ENCODE measurements at regions of chr14 and their contacts with region 1.

Region 1: DNA sequence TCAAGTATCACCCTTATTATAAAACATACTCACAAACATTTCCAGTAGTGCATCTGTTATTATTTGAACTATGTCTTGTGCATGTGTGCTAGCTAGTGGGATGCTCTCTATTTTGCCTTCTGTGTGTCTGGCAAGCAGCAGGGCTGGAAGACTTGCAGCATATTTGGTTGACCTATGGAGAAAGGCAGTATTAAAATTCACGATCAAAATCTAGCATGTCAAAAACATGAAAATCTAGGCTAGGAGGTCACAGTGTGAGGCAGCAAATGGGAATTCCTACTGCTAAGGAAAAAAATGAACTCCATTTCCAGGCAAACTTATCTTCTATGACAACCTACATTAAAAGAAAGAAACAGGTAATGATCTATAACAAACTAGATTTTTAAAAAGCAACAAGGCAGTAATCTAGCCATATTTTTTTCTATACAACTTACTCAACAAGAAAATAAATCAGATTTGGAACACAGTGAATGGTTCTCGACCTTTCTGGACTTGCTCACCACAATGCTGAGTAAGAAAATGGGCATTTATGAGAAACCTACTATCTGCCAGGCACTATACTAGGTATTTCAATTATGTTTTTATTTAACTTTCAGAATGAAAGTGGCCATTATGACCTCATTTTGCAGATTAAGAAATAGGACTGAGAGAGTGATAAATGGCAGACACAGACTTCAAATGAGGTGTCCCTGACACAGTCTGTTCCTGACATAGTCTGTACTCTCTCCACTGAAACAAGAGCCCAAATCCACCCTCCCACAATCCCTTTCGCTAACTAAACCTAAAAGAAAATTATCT is 96.8 kb downstream of the TXNDC16 start:
- DNase-seq: no peak
- H3K4me3 Mint-ChIP-seq: no peak overlapping the region
- H3K27ac Mint-ChIP-seq: no peak overlapping the region
- H3K4me1 Mint-ChIP-seq: peaks cover 29% of the 10 kb centered on the region
- H3K27me3 Mint-ChIP-seq: no peaks in the 10 kb centered on the region

Region 2: DNA sequence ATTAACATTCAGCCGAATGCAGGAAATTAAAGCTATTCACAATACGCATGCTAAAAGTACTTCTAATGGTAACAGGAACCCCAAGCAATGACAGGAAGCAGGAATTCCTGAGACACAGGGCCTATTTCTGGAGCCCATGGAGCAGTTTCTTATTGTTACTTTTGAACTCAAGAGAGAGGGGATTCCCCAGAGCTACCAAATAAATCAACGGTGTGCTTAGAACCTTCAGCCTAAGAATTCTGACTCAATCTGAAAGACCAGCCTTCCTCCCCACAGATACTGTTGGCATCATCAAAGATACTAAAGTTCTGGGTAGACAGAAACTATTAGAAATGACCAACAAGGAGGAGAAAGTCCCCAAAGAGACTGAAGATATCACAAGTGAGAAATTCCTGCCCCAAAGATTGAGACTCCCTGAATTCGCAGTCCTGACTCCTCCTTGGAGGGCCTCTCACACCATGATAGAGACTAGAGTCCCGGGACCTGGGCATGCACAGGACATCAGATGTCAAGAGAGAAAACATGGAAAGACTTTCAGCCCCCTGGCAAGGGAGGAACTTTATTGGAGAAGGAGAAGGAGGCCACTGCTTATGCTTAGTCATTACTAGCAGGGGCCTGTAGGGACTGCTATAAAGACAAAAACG is 433.4 kb before region 1 on chr14:
- intact Hi-C with region 1: loop called (anchors 1 kb)
- DNase-seq: no peak
- H3K4me3 Mint-ChIP-seq: no peak overlapping the region
- H3K27ac Mint-ChIP-seq: no peak overlapping the region
- H3K4me1 Mint-ChIP-seq: peaks cover 33% of the 10 kb centered on the region
- H3K27me3 Mint-ChIP-seq: no peaks in the 10 kb centered on the region

Region 3: DNA sequence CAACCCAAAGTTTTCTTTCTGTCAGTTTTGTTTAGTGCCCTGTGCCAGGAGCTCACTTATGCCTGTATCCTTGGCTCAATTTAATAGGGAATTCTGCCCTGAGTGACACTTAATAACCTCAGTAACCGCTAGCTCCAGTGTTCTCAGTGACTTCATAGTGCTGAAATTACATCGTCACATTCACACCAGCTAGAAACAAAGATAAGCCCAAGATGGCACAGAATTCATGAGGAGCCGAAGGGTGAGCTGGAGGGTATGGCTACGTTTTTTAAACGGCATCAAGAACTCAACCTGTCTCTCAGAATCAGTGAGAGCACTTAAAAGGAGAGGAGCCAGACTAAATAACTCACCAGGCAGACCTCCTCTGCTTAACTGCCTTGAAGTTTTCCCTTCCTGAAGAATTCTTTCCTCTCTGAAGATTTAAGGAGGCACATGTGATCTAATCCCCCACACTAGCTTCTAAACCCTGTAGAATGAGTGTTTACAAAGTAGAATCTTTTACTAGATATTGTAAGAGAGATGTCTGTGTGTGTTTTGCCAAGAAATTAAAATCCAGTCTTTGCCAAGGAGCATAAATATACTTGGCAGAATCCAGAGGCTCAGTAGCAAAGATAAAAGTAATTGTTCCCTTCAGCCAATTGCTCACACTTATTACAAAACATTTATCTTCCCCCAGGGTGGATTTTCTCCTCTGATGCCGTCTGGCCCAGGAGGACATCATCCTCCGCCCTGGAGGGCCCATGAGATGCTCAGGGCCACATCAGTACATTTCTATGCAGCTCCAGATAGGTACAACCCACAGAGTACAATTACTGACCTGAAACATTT is 104.0 kb before region 1 on chr14:
- intact Hi-C with region 1: loop called (anchors 1 kb)
- DNase-seq: peak; percentile 8
- H3K4me3 Mint-ChIP-seq: peak overlapping the region; percentile 75
- H3K27ac Mint-ChIP-seq: peak overlapping the region; percentile 96
- H3K4me1 Mint-ChIP-seq: peaks cover 73% of the 10 kb centered on the region
- H3K27me3 Mint-ChIP-seq: no peaks in the 10 kb centered on the region

Region 4: DNA sequence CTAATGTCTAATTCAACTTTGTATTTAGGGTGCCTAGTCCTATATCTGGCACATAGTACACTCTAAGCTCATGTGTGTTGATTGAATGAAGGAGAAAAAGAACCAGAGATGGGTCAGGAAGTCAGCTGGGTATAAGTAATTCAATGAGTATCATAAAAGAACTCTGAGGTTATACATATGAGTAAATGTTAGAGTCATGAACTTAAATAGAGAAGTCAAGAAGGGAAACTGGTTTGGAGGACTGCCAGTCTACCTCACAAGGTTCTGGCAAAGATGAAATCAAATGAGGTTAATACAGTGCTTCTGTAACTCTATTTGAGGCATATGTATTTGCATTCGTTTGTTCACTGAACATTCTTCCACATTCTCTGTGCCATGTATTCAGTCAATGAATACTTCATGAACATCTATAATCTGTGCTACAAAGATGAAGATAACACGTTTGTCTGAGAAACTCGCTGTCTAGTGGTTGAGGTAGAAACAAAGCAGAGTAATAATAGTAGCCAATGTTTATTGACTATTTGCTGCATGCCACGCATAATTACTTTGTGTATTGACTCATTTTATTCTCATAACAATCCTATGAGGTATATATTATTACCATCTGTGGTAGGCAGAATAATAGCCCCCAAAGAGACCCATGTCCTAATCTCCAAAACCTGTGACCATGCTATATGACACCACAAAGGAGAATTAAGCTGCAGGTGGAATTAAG is 52.5 kb before region 1 on chr14:
- intact Hi-C with region 1: loop called (anchors 1 kb)
- DNase-seq: no peak
- H3K4me3 Mint-ChIP-seq: no peak overlapping the region
- H3K27ac Mint-ChIP-seq: peak overlapping the region; percentile 54
- H3K4me1 Mint-ChIP-seq: peaks cover 73% of the 10 kb centered on the region
- H3K27me3 Mint-ChIP-seq: no peaks in the 10 kb centered on the region

Region 5: DNA sequence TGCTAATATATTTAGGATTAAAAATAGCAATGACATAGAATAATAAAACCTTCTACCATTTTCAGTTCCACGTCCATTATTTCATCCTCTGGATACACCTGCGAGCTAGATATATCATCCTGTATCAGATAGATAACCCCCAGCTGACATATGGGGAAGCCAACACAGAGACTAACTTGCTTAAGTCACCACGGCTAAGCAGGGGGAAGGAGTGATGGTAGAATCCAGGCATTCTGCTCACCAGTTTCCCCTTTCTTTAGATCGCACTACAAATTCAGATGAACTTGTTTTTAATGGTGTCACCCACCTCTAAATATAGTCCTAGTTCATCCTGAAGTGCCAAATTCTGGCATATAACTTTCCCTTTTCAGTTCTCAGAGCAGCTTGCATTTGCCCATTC is 13.3 kb before region 1 on chr14:
- intact Hi-C with region 1: loop called (anchors 2 kb)
- DNase-seq: no peak
- H3K4me3 Mint-ChIP-seq: no peak overlapping the region
- H3K27ac Mint-ChIP-seq: no peak overlapping the region
- H3K4me1 Mint-ChIP-seq: peaks cover 8% of the 10 kb centered on the region
- H3K27me3 Mint-ChIP-seq: no peaks in the 10 kb centered on the region

Region 6: DNA sequence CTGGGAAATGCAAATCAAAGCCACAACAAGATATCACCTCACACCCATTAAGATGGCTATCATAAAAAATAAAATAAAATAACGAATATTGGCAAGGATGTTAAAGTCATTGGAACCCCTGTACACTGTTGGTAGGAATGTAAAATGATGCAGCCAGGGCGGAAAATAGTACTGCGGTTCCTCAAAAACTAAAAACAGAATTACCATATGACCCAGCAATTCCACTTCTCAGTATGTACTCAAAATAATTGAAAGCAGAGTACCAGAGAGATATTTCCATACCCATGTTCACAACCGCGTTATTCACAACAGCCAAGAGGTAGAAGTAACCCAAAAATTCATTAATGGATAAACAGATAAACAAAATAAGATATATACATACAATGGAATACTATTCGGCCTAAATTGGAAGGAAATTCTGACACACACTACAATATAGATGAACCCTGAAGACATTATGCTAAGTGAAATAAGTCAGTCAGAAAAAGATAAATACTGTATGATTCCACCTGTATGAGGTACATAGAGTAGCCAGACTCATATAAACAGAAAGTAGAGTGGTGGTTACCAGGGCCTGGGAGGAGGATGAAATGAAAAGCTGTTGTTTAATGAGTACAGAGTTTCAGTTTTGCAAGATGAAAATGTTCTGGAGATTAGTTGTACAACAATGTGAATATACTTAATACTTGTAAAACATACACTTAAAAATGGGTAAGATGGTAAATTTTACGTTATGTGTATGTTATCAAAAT is 12.2 kb after region 1 on chr14:
- intact Hi-C with region 1: loop called (anchors 1 kb)
- DNase-seq: no peak
- H3K4me3 Mint-ChIP-seq: no peak overlapping the region
- H3K27ac Mint-ChIP-seq: peak overlapping the region; percentile 75
- H3K4me1 Mint-ChIP-seq: peaks cover 24% of the 10 kb centered on the region
- H3K27me3 Mint-ChIP-seq: no peaks in the 10 kb centered on the region

Region 7: GRCh38 chr14:52950410-52950897 is 495.0 kb after region 1 on chr14:
- intact Hi-C with region 1: no loop called
- DNase-seq: no peak
- H3K4me3 Mint-ChIP-seq: peak overlapping the region; percentile 83
- H3K27ac Mint-ChIP-seq: peak overlapping the region; percentile 3
- H3K4me1 Mint-ChIP-seq: peaks cover 14% of the 10 kb centered on the region
- H3K27me3 Mint-ChIP-seq: peaks cover 56% of the 10 kb centered on the region